Ovary (tissue), 10 donors: ENCODE measurements at regions of chr5 and their contacts with region 1.

Region 1: DNA sequence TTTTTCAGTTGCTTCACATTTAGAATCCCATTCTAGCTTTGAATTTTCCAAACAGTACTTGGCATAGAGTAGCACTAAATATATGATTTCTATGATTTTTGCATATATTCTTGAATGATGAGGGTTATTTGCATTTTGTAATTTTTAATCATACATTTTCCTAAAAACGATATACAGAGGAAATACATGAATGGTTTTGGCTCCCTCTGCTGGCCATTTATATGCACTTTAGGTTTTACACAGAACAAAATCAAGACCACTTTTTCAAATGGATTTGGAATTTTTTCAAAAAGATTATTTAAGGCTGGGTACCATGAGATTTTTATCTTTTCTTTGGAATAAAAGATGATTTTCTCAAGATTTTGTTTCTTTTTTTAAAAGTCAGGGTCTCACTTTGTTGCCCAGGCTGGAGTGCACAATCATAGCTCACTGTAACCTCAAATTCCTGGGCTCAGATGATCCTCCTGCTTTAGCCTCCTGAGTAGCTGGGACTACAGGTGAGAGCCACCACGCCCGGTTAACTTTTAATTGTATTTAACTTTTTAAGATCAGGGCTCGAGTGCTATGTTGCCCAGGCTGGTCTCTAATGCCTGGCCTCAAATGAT is 16.7 kb upstream of the COMMD10 start:
- DNase-seq: peak in 1 of 5 donors; percentile 52
- H3K4me3 ChIP-seq: no peak overlapping the region
- H3K27ac ChIP-seq: no peak overlapping the region
- H3K4me1 ChIP-seq: no peaks in the 10 kb centered on the region
- H3K27me3 ChIP-seq: no peaks in the 10 kb centered on the region
- CTCF ChIP-seq: peak; percentile 60 to 83 (median 68)
- EP300 ChIP-seq: no peak
- POLR2A ChIP-seq: no peak

Region 2: DNA sequence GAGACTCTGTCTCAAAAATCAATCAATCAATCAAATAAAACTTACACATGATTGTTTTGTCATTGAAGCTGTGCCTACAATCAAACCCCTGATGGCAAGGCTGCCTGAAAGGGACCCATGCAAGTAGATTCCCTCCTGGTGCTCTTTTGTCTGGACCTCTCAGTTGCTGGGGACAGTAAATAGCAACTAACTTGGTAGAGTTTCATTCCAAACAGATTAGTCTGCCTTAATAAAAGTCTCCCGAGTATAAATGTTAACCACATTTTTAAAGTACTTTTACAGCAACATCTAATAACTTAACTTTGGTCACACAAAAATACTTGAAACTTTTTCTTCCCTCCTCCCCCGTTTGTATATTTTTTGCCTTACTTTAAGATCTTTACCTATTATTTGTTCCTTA is 629.1 kb before region 1 on chr5:
- intact Hi-C with region 1: no loop called
- DNase-seq: no peak
- H3K4me3 ChIP-seq: no peak overlapping the region
- H3K27ac ChIP-seq: no peak overlapping the region
- H3K4me1 ChIP-seq: no peaks in the 10 kb centered on the region
- H3K27me3 ChIP-seq: no peaks in the 10 kb centered on the region
- CTCF ChIP-seq: no peak
- EP300 ChIP-seq: no peak
- POLR2A ChIP-seq: no peak

Region 3: DNA sequence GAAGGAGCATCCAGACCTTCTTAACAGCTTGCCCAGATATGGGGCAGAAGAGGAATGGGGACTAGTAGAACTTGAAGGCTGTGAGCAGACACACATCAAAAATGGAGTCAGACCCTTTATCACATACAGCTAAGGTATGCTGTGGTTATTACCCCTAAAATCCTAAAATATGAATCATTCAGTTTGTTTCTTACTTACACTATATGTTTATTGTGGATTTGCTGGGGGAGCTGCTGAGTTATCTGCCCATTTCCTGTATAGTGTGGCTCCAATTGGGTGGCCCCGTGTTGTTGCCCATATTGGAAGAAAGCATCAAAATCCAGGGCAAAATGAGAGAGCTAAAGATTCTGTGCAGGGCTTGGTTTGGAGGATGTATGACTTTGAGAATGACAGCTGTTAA is 169.5 kb before region 1 on chr5:
- intact Hi-C with region 1: loop called in 1 of 4 experiments (anchors 10 kb)
- DNase-seq: no peak
- H3K4me3 ChIP-seq: no peak overlapping the region
- H3K27ac ChIP-seq: no peak overlapping the region
- H3K4me1 ChIP-seq: peaks cover 2% of the 10 kb centered on the region
- H3K27me3 ChIP-seq: no peaks in the 10 kb centered on the region
- CTCF ChIP-seq: no peak
- EP300 ChIP-seq: no peak
- POLR2A ChIP-seq: no peak